Psoas muscle (tissue), 8 donors: ENCODE measurements at regions of chr16 and their contacts with region 1.

Region 1: DNA sequence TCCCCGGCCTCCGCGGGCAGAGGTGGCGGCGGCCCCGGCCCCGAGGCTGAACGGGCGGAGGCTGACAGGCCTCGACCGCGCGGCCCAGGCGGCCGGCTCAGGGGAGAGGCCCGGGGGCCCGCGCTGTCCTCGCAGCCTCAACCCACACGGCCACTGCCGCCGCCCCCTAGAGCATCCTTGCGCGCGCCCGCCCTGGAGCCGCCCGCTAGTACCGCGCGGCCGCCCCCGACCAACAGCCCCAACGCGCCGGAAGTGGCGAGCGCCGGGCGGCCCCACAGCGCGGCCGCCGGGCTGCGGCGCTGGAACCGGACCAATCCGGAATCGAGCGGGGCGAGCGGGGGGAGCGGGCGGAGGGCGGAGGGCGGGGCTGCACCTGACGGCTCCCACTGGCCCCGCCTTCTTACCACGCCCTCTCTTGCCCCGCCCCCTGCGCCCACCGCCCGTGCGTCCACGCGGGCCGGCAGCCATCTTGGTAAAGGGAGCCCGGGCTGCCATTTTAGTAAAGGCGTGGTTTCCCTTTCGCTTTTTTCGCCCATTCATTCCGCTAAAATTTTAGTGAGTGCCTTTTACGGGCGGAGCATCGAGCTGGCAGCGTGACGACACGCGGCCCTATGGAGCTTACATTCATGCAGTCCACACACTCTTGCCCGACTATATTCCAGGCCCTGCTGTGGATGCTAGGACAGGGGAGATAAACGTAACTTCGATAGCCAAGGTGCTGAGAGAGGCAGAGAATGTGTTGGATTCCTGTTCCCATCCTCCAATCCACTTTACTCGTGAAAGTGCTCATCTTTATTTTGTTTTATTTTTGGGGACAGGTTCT is at the start of gene XPO6:
- DNase-seq: peak; percentile 96 to 98
- ATAC-seq: peak; percentile 94 to 96 (median 96)
- H3K4me3 ChIP-seq: peak within 1 kb of the TSS; percentile 92
- H3K27ac ChIP-seq: peak within 1 kb of the TSS; percentile 93
- H3K4me1 ChIP-seq: peaks cover 17% of the 10 kb centered on the region
- H3K27me3 ChIP-seq: no peaks in the 10 kb centered on the region
- CTCF ChIP-seq: no peak
- total RNA-seq, gene XPO6: 24.5 to 44.2 (median 27.0) TPM

Region 2: GRCh38 chr16:28258567-28258966 is 46.6 kb after region 1 on chr16:
- intact Hi-C with region 1: loop called (anchors 2 to 5 kb)
- DNase-seq: peak; percentile 79 to 93
- ATAC-seq: peak; percentile 73 to 82 (median 77)
- H3K4me3 ChIP-seq: peak overlapping the region; percentile 73
- H3K27ac ChIP-seq: peak overlapping the region; percentile 91
- H3K4me1 ChIP-seq: peaks cover 25% of the 10 kb centered on the region
- H3K27me3 ChIP-seq: no peaks in the 10 kb centered on the region
- CTCF ChIP-seq: no peak